ENCODE measurements at regions of chr12 and their contacts with region 1.

Region 1: DNA sequence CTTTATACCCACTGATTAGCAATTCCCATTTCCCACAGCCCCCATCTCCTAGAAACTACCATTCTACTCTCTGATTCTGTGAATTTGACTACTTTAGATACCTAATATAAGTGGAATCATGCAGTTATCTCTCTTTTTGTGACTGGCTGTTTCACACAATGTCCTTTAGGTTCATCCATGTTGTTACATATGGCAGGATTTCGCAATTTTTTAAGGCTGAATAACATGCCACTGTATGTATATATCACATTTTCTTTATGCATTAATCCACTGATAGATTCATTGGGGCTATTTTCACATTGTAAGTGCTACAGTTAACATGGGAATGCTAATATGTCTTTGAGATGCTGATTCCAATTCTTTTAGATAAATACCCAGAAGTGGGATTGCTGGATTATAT is 11.8 kb upstream of the TBK1 start:
- DNase-seq: no peak
- H3K4me3 ChIP-seq: no peak overlapping the region
- H3K27ac ChIP-seq: no peak overlapping the region
- H3K4me1 ChIP-seq: no peaks in the 10 kb centered on the region
- H3K27me3 ChIP-seq: no peaks in the 10 kb centered on the region
- CTCF ChIP-seq: no peak
- EP300 ChIP-seq: no peak
- POLR2A ChIP-seq: no peak
- RAD21 ChIP-seq: no peak

Region 2: GRCh38 chr12:64171715-64172114 is 268.4 kb before region 1 on chr12:
- CTCF ChIA-PET with region 1: no interaction called
- POLR2A ChIA-PET with region 1: no interaction called
- DNase-seq: no peak
- H3K4me3 ChIP-seq: no peak overlapping the region
- H3K27ac ChIP-seq: no peak overlapping the region
- H3K4me1 ChIP-seq: peaks cover 0 to 10% (median 6%) of the 10 kb centered on the region in 4 experiments; a peak in 5 of 7 replicates
- H3K27me3 ChIP-seq: no peaks in the 10 kb centered on the region
- CTCF ChIP-seq: no peak
- EP300 ChIP-seq: no peak
- POLR2A ChIP-seq: no peak
- RAD21 ChIP-seq: no peak

Region 3: DNA sequence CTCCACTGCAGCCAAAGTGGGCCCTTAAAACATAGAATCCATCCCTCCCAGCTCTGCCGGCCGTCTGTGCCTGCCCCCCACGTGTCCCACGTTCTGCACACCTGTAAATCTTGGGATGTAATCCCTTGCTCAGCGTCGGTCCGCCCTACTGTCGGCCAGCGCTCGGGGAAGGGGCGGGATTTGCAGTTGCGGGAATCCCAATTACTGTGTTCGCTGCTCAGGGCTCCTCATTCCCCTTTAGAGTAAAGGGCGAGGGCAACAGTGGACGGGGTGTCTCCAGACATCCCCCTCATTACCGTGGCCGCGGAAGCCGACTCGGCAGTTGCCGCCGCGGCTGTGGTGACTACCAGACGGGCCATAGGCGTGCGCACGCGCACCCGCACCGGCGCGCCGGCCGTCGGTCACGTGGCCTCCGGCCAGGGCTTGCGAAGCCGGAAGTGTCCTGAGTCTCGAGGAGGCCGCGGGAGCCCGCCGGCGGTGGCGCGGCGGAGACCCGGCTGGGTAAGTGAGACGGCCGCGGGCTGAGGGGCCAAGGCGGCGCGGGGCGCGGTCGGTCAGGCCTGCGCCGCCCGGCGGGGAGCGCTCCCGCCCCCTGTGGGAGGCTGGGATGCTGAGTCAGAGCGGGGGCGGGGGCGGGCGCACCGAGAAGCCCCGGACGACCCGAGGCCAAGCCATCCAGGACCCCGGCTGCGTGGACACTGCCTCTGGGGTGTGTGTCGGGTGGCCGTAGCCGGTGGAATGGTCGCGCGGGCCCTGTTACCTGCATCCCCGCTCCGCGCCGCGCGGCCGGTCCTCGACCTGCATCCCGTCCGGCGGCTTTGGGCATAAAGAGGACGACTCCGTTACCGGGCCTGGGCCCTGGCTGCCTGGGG is 11.8 kb after region 1 on chr12 and contains the start of gene TBK1:
- CTCF ChIA-PET with region 1: interaction called, 3 read pairs
- POLR2A ChIA-PET with region 1: interaction called, 17 read pairs
- DNase-seq: peak; percentile 53 to 95
- H3K4me3 ChIP-seq: peak within 1 kb of the TSS; percentile 75 to 91 (median 88)
- H3K27ac ChIP-seq: peak within 1 kb of the TSS; percentile 65
- H3K4me1 ChIP-seq: peaks cover 0 to 10% (median 3%) of the 10 kb centered on the region in 4 experiments; a peak in 2 of 7 replicates
- H3K27me3 ChIP-seq: no peaks in the 10 kb centered on the region
- CTCF ChIP-seq: 0 out of 4 replicates have a peak, but pooled peaks of 1 of the 3 experiments have one; percentile 0
- EP300 ChIP-seq: no peak
- POLR2A ChIP-seq: peak; percentile 50 to 70; a peak in 2 of 3 replicates
- RAD21 ChIP-seq: no peak
- total RNA-seq, gene TBK1: 19.2 and 20.4 TPM in 2 replicates

Measured in H1 (cell line).